ENCODE measurements at regions of chr17 and their contacts with region 1.

Region 1: GRCh38 chr17:40098846-40099618 is 1.4 kb downstream of the NR1D1 start:
- DNase-seq: peak; percentile 97
- ATAC-seq: peak; percentile 85
- H3K4me3 ChIP-seq: peak overlapping the region; percentile 87 to 98
- H3K27ac ChIP-seq: peak overlapping the region; percentile 89
- H3K4me1 ChIP-seq: peaks cover 32% of the 10 kb centered on the region
- H3K27me3 ChIP-seq: no peaks in the 10 kb centered on the region
- CTCF ChIP-seq: no peak

Region 2: DNA sequence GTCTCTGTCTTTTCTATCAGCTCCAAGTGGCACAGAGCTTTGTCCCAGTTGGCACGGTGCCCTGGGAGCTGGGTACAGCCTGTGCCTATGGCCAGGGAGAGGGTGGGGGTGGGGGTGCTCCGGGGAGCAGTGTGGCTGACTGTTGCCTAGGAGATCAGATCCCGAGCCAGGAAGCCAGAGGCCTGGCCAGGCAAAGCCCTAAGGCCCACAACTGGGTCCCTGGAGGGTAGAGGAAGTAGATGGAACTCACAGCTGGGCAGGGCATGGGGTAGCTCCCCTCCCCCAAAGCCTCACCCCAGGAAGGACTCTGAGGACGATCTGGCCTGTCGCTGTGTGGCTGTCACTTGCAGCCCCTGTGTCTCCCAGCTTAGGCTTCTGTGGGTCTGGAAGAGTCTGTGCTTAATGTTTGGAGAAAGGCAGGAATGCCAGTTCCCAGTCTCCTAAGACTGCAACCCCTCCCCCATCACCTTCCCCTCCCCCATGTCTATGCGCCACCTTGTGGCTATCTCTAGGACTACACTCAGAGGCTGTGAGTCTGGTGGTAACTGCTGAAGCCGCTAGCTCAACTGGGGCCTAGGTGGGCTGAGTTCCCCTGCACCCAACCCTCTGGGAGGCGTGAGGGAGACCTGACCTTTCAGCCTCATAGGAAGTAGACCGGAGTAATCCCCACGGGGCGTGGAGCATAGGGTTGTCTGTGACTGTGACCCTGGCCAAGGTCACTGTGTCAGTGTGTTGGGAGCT is 23.7 kb before region 1 on chr17:
- CTCF ChIA-PET with region 1: interaction called, 6 read pairs
- POLR2A ChIA-PET with region 1: interaction called, 12 read pairs
- in situ Hi-C with region 1: no loop called
- intact Hi-C with region 1: no loop called
- DNase-seq: no peak
- ATAC-seq: peak; percentile 59
- H3K4me3 ChIP-seq: no peak overlapping the region
- H3K27ac ChIP-seq: peak overlapping the region; percentile 53; the same call in 1 of the 2 replicates
- H3K4me1 ChIP-seq: peaks cover 46% of the 10 kb centered on the region
- H3K27me3 ChIP-seq: no peaks in the 10 kb centered on the region
- CTCF ChIP-seq: peak; percentile 91

Measured in Panc1 (cell line).